ENCODE measurements at regions of chr1 and their contacts with region 1.

Region 1: DNA sequence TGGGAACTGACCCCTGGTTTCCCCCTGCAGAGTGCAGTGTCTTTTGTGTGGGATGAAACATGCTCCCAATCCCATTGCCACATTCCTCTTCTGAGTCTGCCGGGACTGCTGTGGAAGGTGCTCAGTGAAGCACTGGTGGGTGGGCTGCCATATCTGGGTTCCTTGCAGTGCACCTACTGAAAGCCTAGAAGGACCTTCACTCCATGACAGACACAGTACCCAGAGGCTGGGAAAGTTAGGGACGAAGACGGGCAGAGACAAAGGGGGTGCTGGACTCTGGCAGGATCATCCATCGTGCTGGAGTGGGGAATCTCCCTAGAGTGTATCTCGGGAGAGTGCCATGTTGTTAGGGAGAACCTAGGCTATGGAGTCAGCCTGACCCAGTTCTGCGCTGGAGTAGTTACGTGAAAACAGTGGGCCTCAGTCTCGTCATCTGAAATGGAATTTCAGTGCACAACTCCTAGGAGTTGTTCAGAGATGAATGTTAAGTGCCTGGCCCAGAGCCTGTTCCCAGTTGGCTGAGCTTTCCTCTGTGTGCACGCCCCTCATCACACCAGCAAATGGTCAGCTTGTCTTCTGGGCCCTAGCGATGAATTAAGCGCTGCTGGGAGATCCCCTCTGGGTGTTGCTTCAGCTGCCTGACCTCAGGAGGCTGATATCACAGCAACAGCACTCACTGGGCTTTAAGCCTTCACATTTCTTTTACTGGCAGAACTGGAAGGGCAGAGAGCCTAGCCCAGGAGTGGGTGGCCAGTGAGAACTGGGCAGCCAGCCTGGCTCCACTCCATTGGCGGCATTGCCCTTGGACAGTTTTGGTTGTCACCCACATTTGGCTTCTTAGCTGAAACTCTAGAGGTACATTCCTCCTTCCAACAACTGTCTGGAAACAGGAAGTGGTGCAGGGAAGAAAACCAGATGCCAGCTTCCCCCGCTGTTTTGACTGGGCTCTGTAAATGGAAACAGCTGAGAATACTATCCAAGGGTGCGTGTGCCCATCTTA is 479.8 kb upstream of the VAMP3 start:
- DNase-seq: peak; percentile 83

Region 2: GRCh38 chr1:7341145-7341905 is 50.1 kb after region 1 on chr1:
- intact Hi-C with region 1: loop called (anchors 5 kb)
- DNase-seq: no peak

Region 3: GRCh38 chr1:7366955-7367665 is 75.8 kb after region 1 on chr1:
- intact Hi-C with region 1: loop called (anchors 1 kb)
- DNase-seq: no peak

Region 4: DNA sequence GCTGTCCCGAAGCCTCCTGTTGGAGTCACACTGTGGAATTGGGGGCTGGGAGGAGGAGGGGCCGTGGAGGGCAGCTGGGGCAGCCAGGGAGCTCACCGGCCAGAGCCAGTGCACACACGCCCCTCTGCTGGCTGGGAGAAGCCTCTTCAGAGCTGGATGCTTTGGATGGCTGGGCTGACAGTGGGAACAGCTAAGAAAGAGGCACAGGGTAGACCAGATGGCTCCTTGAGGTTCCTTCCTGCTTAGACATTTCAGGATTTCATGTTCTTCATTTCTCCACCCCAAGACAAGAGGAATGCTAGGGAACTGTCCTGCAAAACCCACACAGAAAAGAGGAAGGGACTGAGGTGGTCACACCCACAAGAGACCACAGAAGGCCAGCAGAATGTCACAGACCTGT is 225.1 kb after region 1 on chr1:
- intact Hi-C with region 1: loop called (anchors 5 kb)
- DNase-seq: no peak

Region 5: DNA sequence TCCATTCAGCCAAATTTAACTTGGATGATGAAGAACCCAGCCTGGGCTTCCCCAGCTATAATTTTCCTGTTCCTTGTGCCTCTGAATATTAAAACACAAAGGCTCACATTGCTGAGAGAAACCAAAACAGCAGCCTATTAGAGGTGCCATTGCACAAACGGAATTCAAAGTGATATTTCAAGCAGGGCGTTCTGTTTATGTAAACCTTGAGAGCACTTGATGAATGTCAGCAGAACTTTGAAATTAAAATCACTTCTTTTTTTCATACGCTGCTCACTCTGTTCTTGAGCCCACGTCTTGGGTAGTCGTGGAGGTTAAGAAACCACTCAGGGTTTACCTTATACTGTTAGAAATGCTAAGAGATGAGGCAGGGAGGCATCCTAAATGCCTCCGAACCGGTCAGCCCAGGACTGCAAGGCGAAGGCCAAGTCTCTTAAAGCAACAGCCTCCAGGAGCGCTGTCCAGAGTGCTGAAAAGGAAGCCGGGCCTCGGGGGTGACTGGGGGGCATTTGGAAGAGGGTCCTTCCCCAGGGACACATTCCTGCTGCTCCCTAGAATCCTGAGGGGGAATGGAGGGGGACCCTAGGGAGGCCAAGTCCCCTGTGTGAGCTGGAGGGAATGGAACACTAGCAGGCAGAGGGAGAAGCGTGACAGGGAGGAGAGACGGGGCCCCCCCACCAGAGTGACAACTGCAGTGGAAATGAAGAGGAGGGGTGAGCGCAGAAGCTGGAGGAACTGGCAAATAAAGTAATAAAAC is 325.0 kb after region 1 on chr1:
- intact Hi-C with region 1: loop called (anchors 2 kb)
- DNase-seq: peak; percentile 86